Ascending aorta (tissue), 2 donors: ENCODE measurements at regions of chr11 and their contacts with region 1.

Region 1: GRCh38 chr11:111230122-111230465 is 15.4 kb upstream of the POU2AF2 start:
- DNase-seq: no peak
- H3K4me3 ChIP-seq: peak overlapping the region; percentile 46 to 54
- H3K27ac ChIP-seq: no peak overlapping the region
- H3K4me1 ChIP-seq: peaks cover 0 to 2% of the 10 kb centered on the region in 2 donors
- H3K27me3 ChIP-seq: no peaks in the 10 kb centered on the region
- CTCF ChIP-seq: no peak

Region 2: GRCh38 chr11:110200241-110200640 is 1029.9 kb before region 1 on chr11:
- intact Hi-C with region 1: loop called (anchors 10 kb)
- DNase-seq: no peak
- H3K4me3 ChIP-seq: no peak overlapping the region
- H3K27ac ChIP-seq: no peak overlapping the region
- H3K4me1 ChIP-seq: no peaks in the 10 kb centered on the region
- H3K27me3 ChIP-seq: no peaks in the 10 kb centered on the region
- CTCF ChIP-seq: no peak

Region 3: GRCh38 chr11:110463153-110463552 is 766.9 kb before region 1 on chr11:
- intact Hi-C with region 1: loop called (anchors 10 kb)
- DNase-seq: no peak
- H3K4me3 ChIP-seq: no peak overlapping the region
- H3K27ac ChIP-seq: no peak overlapping the region
- H3K4me1 ChIP-seq: no peaks in the 10 kb centered on the region
- H3K27me3 ChIP-seq: no peaks in the 10 kb centered on the region
- CTCF ChIP-seq: peak in 1 of 3 experiments; percentile 46

Region 4: GRCh38 chr11:111272420-111272819 is 42.3 kb after region 1 on chr11:
- intact Hi-C with region 1: no loop called
- DNase-seq: no peak
- H3K4me3 ChIP-seq: no peak overlapping the region
- H3K27ac ChIP-seq: no peak overlapping the region
- H3K4me1 ChIP-seq: no peaks in the 10 kb centered on the region
- H3K27me3 ChIP-seq: no peaks in the 10 kb centered on the region
- CTCF ChIP-seq: no peak